ENCODE measurements at regions of chr2 and their contacts with region 1.

Region 1: GRCh38 chr2:72887754-72888437 is 688 bp downstream of the SPR start:
- DNase-seq: peak; percentile 81
- ATAC-seq: peak; percentile 73
- H3K4me3 ChIP-seq: peak overlapping the region; percentile 67 to 69
- H3K27ac ChIP-seq: peak overlapping the region; percentile 99
- H3K4me1 ChIP-seq: peaks cover 11 to 23% of the 10 kb centered on the region in 2 experiments
- H3K27me3 ChIP-seq: no peaks in the 10 kb centered on the region
- CTCF ChIP-seq: peak; percentile 88 to 99 (median 90)
- POLR2A ChIP-seq: no peak
- RAD21 ChIP-seq: peak; percentile 59

Region 2: DNA sequence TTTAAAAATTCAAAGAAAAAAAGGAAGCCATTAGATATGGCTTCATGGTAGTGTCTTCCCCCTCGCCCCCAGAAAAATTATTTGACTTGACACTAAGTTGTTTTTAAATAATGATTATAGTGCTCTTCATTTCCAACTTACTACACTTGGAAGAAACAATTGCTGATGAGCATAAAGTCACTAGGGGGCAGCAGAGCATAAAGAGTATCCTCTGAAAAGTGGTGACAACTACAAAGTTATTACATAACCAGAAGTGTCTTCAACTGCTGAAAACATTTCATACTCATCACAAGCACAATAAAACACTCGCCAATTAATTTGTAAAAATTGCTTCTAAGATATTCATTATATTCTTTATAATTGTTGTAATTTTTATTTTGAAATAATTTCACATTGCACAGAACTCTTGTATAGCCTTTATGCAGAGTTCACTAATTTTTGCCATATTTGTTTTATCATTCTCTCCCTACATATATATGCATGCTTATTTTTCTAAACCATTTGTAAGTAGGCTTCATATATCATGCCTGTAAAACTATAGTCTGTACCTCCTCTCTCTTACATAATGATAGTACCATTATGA is 116.9 kb before region 1 on chr2:
- CTCF ChIA-PET with region 1: interaction called, 9 read pairs
- POLR2A ChIA-PET with region 1: no interaction called
- RAD21 ChIA-PET with region 1: no interaction called
- intact Hi-C with region 1: loop called (anchors 1 kb)
- DNase-seq: peak; percentile 56
- ATAC-seq: peak; percentile 72; the same call in 1 of the 2 replicates
- H3K4me3 ChIP-seq: no peak overlapping the region
- H3K27ac ChIP-seq: no peak overlapping the region
- H3K4me1 ChIP-seq: 0 out of 4 replicates have a peak, but pooled peaks cover 0 to 4% of the 10 kb centered on the region in 2 experiments
- H3K27me3 ChIP-seq: no peaks in the 10 kb centered on the region
- CTCF ChIP-seq: peak; percentile 68 to 88 (median 85)
- POLR2A ChIP-seq: no peak
- RAD21 ChIP-seq: peak; percentile 93

Region 3: GRCh38 chr2:72915907-72916742 is 28.2 kb after region 1 on chr2:
- CTCF ChIA-PET with region 1: interaction called, 6 read pairs
- POLR2A ChIA-PET with region 1: no interaction called
- RAD21 ChIA-PET with region 1: no interaction called
- intact Hi-C with region 1: loop called (anchors 2 kb)
- DNase-seq: no peak
- ATAC-seq: peak; percentile 81
- H3K4me3 ChIP-seq: peak overlapping the region; percentile 53 to 55
- H3K27ac ChIP-seq: peak overlapping the region; percentile 45; the same call in 1 of the 2 replicates
- H3K4me1 ChIP-seq: peaks cover 12 to 28% of the 10 kb centered on the region in 2 experiments
- H3K27me3 ChIP-seq: peaks cover 8% of the 10 kb centered on the region; the same call in 1 of the 2 replicates
- CTCF ChIP-seq: no peak
- POLR2A ChIP-seq: no peak
- RAD21 ChIP-seq: no peak

Region 4: DNA sequence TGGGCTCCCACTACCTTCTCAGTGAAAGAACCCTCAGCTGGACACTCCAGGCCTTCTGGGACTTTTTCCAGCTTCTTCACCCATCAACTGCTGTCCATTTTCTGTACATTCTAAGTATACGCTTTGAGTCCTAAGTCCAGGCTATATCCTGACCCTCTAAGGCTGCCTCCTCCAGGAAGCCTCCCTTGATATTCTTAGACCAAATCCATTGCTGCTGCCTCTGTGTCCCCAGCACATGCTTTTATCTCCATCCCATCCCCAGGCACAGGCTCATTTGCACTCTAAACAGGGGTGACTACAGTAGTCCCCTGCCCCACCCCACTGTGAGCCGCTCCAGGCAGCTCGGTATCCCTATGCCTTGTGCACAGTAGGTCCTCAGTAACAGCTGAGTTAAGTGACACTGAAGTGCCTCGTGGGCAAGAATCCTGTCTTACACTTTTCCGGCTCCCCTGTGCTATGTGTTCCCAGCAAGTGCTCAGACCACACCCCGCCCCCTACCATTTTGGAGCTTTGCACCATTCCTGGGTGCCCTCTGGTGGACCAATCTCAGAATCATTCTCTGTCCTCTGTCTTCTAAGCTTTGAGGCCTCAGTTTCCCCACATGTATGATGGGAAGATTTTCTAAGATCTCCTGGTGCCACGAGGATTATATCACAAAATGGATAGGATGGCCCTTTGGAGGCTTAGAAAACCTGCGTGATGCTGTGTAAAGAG is 64.4 kb after region 1 on chr2:
- CTCF ChIA-PET with region 1: interaction called, 14 read pairs
- POLR2A ChIA-PET with region 1: no interaction called
- RAD21 ChIA-PET with region 1: no interaction called
- intact Hi-C with region 1: no loop called
- DNase-seq: no peak
- ATAC-seq: peak; percentile 37; the same call in 1 of the 2 replicates
- H3K4me3 ChIP-seq: no peak overlapping the region
- H3K27ac ChIP-seq: no peak overlapping the region
- H3K4me1 ChIP-seq: no peaks in the 10 kb centered on the region
- H3K27me3 ChIP-seq: no peaks in the 10 kb centered on the region
- CTCF ChIP-seq: peak in 2 of 3 experiments; percentile 8 to 12; a peak in 2 of 6 replicates
- POLR2A ChIP-seq: no peak
- RAD21 ChIP-seq: no peak

Region 5: GRCh38 chr2:73071360-73072133 is 183.7 kb after region 1 on chr2 and contains the start of gene SFXN5:
- CTCF ChIA-PET with region 1: interaction called, 3 read pairs
- POLR2A ChIA-PET with region 1: no interaction called
- RAD21 ChIA-PET with region 1: no interaction called
- intact Hi-C with region 1: loop called (anchors 2 kb)
- DNase-seq: peak; percentile 88
- ATAC-seq: peak; percentile 94
- H3K4me3 ChIP-seq: peak within 1 kb of the TSS; percentile 80 to 81
- H3K27ac ChIP-seq: peak within 1 kb of the TSS; percentile 74
- H3K4me1 ChIP-seq: peaks cover 5 to 19% of the 10 kb centered on the region in 2 experiments; a peak in 3 of 4 replicates
- H3K27me3 ChIP-seq: no peaks in the 10 kb centered on the region
- CTCF ChIP-seq: 0 out of 6 replicates have a peak, but pooled peaks of 1 of the 3 experiments have one; percentile 2
- POLR2A ChIP-seq: peak; percentile 16
- RAD21 ChIP-seq: no peak
- total RNA-seq, gene SFXN5: 10.0 TPM

Region 6: GRCh38 chr2:73163483-73164367 is 275.8 kb after region 1 on chr2:
- CTCF ChIA-PET with region 1: interaction called, 13 read pairs
- POLR2A ChIA-PET with region 1: no interaction called
- RAD21 ChIA-PET with region 1: no interaction called
- intact Hi-C with region 1: loop called (anchors 2 kb)
- DNase-seq: peak; percentile 69
- ATAC-seq: peak; percentile 99
- H3K4me3 ChIP-seq: no peak overlapping the region
- H3K27ac ChIP-seq: no peak overlapping the region
- H3K4me1 ChIP-seq: no peaks in the 10 kb centered on the region; a peak in 2 of 4 replicates
- H3K27me3 ChIP-seq: no peaks in the 10 kb centered on the region
- CTCF ChIP-seq: peak; percentile 83 to 87 (median 87); a peak in 5 of 6 replicates
- POLR2A ChIP-seq: no peak
- RAD21 ChIP-seq: peak; percentile 86

Region 7: DNA sequence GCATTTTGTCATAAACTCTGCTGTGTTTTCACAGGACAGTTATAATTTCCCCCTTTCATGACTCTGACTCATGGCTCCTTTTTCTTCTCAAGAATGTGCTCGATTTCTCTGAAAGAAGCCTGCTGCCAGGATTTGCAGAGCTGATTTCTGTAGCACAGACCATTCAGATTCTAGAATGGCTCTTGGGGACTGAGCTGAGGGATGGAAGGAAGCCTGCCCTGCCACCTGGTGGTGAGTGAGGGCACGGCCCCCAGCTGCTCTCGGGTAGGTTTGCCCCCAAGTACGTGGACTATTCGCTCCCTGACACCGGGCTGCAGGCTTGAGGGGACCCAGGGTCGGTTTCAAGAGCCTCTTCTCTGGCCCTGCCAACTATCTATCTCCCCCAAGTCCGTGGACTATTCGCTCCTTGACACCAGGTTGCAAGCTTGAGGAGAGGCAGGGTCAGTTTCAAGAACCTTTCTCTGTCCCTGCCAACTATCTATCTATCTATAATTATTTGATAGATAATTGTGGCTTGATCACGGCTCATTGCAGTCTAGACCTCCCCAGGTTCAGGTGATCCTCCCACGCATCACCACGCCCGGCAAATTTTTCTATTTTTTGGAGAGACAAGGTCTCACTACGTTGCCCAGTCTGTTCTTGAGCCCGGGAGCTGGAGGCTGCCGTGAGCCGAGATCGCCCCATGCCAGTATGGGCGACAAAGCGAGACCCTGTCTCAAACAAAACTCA is 324.7 kb after region 1 on chr2:
- CTCF ChIA-PET with region 1: interaction called, 10 read pairs
- POLR2A ChIA-PET with region 1: no interaction called
- RAD21 ChIA-PET with region 1: no interaction called
- intact Hi-C with region 1: no loop called
- DNase-seq: no peak
- ATAC-seq: peak; percentile 81
- H3K4me3 ChIP-seq: no peak overlapping the region
- H3K27ac ChIP-seq: no peak overlapping the region
- H3K4me1 ChIP-seq: peaks cover 3 to 34% of the 10 kb centered on the region in 2 experiments; a peak in 3 of 4 replicates
- H3K27me3 ChIP-seq: no peaks in the 10 kb centered on the region
- CTCF ChIP-seq: peak; percentile 78 to 99 (median 95)
- POLR2A ChIP-seq: no peak
- RAD21 ChIP-seq: peak; percentile 78

Measured in HCT116 (cell line).